ENCODE measurements at regions of chr15 and their contacts with region 1.

Region 1: DNA sequence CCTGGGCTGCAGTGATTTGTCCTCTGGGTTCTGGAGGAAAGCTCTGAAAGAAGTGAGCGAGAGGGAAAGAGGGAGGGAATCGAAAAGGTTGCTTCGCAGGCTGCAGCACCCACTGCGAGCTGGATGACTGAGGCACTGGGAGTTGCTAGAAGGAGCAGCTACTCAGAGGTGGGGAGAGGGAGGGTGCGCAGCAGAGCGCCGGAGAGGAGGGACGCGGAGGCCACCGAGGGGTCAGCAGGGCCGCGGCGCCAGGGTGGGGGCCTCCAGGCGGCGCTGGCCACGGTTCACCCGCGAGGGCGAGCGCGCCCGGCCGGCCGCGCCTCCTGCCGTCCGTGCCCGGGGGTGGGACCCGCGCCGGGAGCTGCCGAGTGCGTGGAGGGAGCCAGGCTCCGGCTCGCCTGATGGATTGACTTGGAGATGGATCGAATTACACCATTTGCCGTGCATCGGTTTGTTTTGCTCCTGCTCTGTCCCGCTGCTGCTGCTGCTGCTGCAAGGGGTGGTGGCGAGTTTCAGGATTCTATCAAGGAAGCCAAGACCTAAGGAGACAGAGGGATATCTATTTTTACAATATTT is at the start of gene SEMA6D:
- DNase-seq: peak in 1 of 2 donors; percentile 88
- H3K4me3 ChIP-seq: peak within 1 kb of the TSS; percentile 77 to 95
- H3K27ac ChIP-seq: peak within 1 kb of the TSS; percentile 88 to 94
- H3K4me1 ChIP-seq: peaks cover 6 to 20% of the 10 kb centered on the region in 2 donors
- H3K27me3 ChIP-seq: no peaks in the 10 kb centered on the region
- CTCF ChIP-seq: peak in 2 of 3 experiments; percentile 31 to 57
- total RNA-seq, gene SEMA6D: 4.0 TPM

Region 2: DNA sequence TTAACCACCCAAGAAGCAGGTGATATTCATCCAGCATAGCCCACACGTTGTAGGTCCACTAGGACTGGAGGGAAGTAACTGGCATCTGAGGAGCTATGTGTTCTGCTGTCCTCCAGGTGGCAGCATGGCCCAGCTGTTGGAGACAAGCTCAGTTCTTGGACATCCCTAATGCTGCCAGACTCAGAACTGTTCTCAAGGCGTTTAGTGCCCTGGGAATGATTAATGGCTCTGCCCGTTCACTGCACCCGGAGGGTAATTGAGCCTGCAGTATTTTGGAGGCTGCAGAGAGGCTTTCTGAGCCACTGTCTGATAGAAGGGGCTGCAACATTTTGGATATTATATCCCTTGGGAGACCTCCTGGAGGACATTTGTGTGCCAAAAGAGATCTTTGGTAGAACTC is 521.1 kb before region 1 on chr15:
- intact Hi-C with region 1: loop called (anchors 10 kb)
- DNase-seq: peak in 1 of 2 donors; percentile 85
- H3K4me3 ChIP-seq: no peak overlapping the region
- H3K27ac ChIP-seq: no peak overlapping the region
- H3K4me1 ChIP-seq: no peaks in the 10 kb centered on the region
- H3K27me3 ChIP-seq: no peaks in the 10 kb centered on the region
- CTCF ChIP-seq: peak; percentile 77 to 87 (median 81)

Region 3: DNA sequence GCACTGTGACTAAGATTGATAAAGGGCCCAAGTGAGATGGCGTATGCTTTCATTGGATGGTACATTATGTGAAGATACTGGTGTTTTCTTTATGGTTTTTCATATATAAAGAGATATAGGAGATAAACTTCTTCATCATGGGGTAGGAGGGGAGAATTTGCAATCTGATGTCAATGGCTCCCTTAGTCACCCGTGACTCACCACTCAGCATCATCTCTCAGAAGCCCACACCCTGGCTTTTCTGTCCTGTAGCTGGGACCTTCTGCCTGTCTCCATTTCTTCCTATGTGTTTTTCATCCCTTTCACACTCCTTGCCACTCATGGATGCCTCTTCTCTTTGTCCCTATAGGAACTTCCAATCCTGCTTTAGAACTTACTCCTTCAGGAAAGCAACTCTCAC is 114.1 kb before region 1 on chr15:
- intact Hi-C with region 1: no loop called
- DNase-seq: no peak
- H3K4me3 ChIP-seq: no peak overlapping the region
- H3K27ac ChIP-seq: no peak overlapping the region
- H3K4me1 ChIP-seq: no peaks in the 10 kb centered on the region
- H3K27me3 ChIP-seq: no peaks in the 10 kb centered on the region
- CTCF ChIP-seq: no peak

Region 4: GRCh38 chr15:47987908-47988532 is 270.9 kb after region 1 on chr15:
- intact Hi-C with region 1: loop called (anchors 5 kb)
- DNase-seq: no peak
- H3K4me3 ChIP-seq: no peak overlapping the region
- H3K27ac ChIP-seq: no peak overlapping the region
- H3K4me1 ChIP-seq: no peaks in the 10 kb centered on the region
- H3K27me3 ChIP-seq: no peaks in the 10 kb centered on the region
- CTCF ChIP-seq: peak; percentile 52 to 71 (median 56)

Region 5: DNA sequence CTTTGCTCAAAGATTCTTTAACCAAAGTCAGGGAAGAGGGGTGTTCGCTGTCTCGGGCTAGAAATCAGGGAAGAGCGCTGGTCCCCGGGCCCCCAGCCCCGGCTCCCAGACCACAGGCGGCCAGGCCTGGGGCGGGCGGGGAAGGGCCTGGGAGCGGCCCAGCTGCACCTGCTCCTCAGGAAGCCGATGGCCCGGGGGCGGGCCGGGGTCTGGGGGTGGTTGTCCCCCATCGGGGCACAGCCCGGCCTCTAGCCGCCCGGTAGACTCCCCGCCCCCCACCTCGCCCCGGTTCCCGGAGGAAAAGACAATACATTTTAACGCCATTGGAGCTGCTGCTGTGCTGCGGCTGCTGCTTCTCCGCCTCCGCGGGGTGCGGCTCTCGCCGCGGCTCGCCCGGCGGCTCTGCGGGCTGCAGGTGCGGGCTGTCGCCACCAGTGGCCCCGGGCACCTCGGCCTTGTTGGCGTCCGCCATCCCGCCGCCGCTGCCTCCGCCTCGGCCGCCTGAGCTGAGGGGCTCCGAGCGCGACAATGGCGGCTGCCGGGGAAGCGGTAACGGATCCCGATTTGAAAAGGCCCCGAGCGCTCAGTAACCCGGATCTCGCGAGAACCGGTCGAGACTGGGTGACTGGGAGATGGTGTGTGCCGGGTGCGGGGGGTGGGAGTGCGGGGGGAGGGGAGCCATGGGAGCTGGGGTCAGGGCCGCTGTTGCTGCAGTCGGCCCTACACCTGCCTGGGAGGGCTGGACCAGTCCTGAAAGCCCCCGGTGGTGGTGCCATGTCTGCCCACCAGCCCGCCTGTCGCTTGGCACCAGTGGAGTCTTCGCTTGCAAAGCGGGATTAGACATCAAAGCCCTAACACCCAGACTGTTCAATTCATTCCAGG is 460.9 kb after region 1 on chr15 and contains the start of gene MYEF2:
- intact Hi-C with region 1: loop called (anchors 5 kb)
- DNase-seq: peak; percentile 15 to 84
- H3K4me3 ChIP-seq: peak within 1 kb of the TSS; percentile 63 to 80
- H3K27ac ChIP-seq: peak within 1 kb of the TSS; percentile 92 to 96
- H3K4me1 ChIP-seq: peaks cover 0 to 6% of the 10 kb centered on the region in 2 donors
- H3K27me3 ChIP-seq: no peaks in the 10 kb centered on the region
- CTCF ChIP-seq: no peak
- total RNA-seq, gene MYEF2: 13.6 TPM

Region 6: GRCh38 chr15:48285329-48286214 is 568.4 kb after region 1 on chr15:
- intact Hi-C with region 1: loop called (anchors 2 kb)
- DNase-seq: peak; percentile 11 to 89
- H3K4me3 ChIP-seq: peak overlapping the region; percentile 35 to 49
- H3K27ac ChIP-seq: peak overlapping the region; percentile 70 to 81
- H3K4me1 ChIP-seq: peaks cover 9 to 20% of the 10 kb centered on the region in 2 donors
- H3K27me3 ChIP-seq: no peaks in the 10 kb centered on the region
- CTCF ChIP-seq: peak; percentile 63 to 75 (median 75)

Measured in ascending aorta (tissue), 2 donors.